ENCODE measurements at regions of chr14 and their contacts with region 1.

Region 1: DNA sequence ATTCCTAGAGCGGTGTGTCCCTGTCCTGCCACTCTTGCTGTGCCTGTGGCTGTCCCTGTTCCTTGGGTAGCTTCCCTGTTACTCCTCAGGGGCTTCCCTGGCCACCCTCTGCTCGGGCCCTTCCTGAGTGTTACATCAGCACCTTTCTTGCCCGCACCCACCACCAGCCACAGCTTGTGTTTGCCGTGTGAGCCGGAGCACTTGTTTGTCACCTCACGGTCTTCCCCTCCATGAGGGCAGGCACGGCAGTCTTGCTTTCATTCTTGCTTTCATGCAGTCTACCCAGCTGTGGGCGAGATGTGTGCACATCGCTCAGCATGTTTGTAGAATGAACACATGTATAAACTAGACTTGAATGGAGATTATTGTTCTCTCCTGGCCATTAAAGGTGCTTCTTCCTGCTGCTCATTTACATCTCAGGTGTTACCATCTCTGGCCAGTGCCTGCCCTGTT is 42.0 kb downstream of the TRAF3 start:
- DNase-seq: peak; percentile 89
- ATAC-seq: peak; percentile 90
- H3K4me3 ChIP-seq: peak overlapping the region; percentile 58
- H3K27ac ChIP-seq: peak overlapping the region; percentile 93
- H3K4me1 ChIP-seq: peaks cover 62% of the 10 kb centered on the region
- H3K27me3 ChIP-seq: no peaks in the 10 kb centered on the region
- CTCF ChIP-seq: no peak
- EP300 ChIP-seq: peak; percentile 92 to 94
- POLR2A ChIP-seq: peak; percentile 77
- RAD21 ChIP-seq: no peak

Region 2: DNA sequence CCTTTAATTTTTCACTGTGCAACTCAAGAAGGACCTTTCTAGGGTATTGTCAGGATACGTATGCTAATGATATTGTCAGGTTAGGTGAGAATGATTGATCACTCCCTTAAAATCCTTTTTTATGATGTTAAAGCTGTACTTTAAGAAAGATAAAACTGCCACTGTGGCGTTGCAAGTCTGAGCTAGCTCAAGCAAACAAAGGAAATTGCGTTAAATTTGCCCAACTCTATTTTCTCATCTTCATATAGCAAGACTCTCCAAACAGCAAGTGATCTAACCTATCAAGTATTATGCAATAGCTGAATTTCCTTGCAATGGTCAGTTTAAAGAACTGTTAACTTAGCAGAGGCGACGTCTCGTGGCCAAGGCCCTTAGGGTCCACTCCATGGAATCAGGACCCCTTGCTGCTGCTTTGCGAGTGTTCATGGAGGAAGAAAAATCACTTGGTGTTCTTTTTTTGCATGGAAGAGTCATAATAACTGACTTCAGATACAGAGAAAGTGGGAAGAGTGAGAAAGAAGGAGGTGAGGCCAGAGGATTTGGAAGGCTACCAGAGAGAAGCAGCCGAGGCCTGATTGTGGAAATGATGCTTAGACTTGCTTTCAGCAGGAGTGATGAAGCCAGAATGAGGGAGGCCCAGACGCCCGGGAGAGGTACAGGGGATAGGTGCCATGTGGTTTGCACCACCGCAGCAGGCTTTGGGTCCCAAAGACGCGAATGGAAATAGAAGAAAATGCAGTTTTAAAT is 39.5 kb before region 1 on chr14:
- CTCF ChIA-PET with region 1: interaction called, 83 read pairs
- POLR2A ChIA-PET with region 1: interaction called, 23 read pairs
- RAD21 ChIA-PET with region 1: interaction called, 86 read pairs
- SMC1A ChIA-PET with region 1: interaction called, 99 read pairs
- in situ Hi-C with region 1: no loop called
- intact Hi-C with region 1: loop called (anchors 2 kb)
- DNase-seq: no peak
- ATAC-seq: no peak
- H3K4me3 ChIP-seq: peak overlapping the region; percentile 90
- H3K27ac ChIP-seq: peak overlapping the region; percentile 98
- H3K4me1 ChIP-seq: peaks cover 31% of the 10 kb centered on the region
- H3K27me3 ChIP-seq: no peaks in the 10 kb centered on the region
- CTCF ChIP-seq: peak in 1 of 3 experiments; percentile 24; a peak in 1 of 6 replicates
- EP300 ChIP-seq: no peak
- POLR2A ChIP-seq: no peak
- RAD21 ChIP-seq: peak; percentile 13; the same call in 1 of the 2 replicates

Region 3: DNA sequence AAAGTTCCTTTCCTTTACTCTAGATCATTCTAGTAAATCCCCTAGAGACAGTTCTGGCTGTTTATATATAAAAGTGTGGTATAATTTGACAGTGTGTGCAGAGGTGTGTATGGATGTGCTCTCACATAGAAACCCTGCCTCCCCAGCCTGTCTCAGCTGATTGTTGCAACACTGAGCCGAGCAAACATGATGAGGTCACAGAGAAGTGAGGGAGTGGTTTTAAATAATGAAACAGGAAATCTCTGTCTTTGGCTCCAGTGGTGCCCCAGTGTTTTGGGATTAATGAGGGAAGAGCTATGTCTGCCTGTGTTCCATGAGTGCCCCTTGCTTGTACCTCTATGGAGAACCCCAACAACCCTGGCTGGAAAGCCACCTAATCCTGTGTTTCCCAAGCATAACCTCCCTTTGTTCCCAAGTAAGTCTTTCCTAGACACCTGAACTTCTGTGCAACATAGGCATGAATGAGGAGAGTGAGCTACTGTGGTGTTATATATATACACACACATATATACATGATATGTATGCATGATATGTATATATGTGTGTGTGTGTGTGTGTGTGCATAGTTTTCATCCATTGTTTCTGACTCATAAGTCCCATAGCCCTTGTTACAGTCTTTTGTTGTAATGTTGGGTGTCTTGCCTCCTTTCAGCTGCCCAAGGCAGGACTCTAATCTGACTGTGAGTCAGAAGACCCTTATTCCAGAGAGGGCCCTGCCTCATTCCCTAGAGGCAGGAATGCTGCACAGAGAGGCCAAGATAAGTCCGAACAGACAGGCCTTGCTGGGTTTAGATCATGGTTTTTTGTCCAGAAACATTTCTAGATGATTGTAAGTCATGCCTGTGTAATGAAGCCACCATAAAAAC is 23.9 kb before region 1 on chr14:
- CTCF ChIA-PET with region 1: interaction called, 7 read pairs
- POLR2A ChIA-PET with region 1: interaction called, 7 read pairs
- RAD21 ChIA-PET with region 1: interaction called, 53 read pairs
- SMC1A ChIA-PET with region 1: interaction called, 52 read pairs
- in situ Hi-C with region 1: no loop called
- intact Hi-C with region 1: loop called (anchors 1 kb)
- DNase-seq: no peak
- ATAC-seq: peak; percentile 66
- H3K4me3 ChIP-seq: no peak overlapping the region
- H3K27ac ChIP-seq: peak overlapping the region; percentile 42
- H3K4me1 ChIP-seq: peaks cover 57% of the 10 kb centered on the region
- H3K27me3 ChIP-seq: no peaks in the 10 kb centered on the region
- CTCF ChIP-seq: no peak
- EP300 ChIP-seq: 0 out of 4 replicates have a peak, but pooled peaks of 1 of the 2 experiments have one; percentile 10
- POLR2A ChIP-seq: no peak
- RAD21 ChIP-seq: no peak

Region 4: GRCh38 chr14:102805371-102806246 is 13.6 kb before region 1 on chr14:
- CTCF ChIA-PET with region 1: interaction called, 6 read pairs
- POLR2A ChIA-PET with region 1: interaction called, 63 read pairs
- RAD21 ChIA-PET with region 1: interaction called, 53 read pairs
- SMC1A ChIA-PET with region 1: interaction called, 52 read pairs
- in situ Hi-C with region 1: no loop called
- intact Hi-C with region 1: no loop called
- DNase-seq: no peak
- ATAC-seq: peak; percentile 73
- H3K4me3 ChIP-seq: peak overlapping the region; percentile 43; the same call in 1 of the 2 replicates
- H3K27ac ChIP-seq: peak overlapping the region; percentile 78
- H3K4me1 ChIP-seq: peaks cover 77% of the 10 kb centered on the region
- H3K27me3 ChIP-seq: no peaks in the 10 kb centered on the region
- CTCF ChIP-seq: 0 out of 6 replicates have a peak, but pooled peaks of 2 of the 3 experiments have one; percentile 0 to 7
- EP300 ChIP-seq: no peak
- POLR2A ChIP-seq: peak; percentile 25; the same call in 1 of the 2 replicates
- RAD21 ChIP-seq: no peak

Region 5: DNA sequence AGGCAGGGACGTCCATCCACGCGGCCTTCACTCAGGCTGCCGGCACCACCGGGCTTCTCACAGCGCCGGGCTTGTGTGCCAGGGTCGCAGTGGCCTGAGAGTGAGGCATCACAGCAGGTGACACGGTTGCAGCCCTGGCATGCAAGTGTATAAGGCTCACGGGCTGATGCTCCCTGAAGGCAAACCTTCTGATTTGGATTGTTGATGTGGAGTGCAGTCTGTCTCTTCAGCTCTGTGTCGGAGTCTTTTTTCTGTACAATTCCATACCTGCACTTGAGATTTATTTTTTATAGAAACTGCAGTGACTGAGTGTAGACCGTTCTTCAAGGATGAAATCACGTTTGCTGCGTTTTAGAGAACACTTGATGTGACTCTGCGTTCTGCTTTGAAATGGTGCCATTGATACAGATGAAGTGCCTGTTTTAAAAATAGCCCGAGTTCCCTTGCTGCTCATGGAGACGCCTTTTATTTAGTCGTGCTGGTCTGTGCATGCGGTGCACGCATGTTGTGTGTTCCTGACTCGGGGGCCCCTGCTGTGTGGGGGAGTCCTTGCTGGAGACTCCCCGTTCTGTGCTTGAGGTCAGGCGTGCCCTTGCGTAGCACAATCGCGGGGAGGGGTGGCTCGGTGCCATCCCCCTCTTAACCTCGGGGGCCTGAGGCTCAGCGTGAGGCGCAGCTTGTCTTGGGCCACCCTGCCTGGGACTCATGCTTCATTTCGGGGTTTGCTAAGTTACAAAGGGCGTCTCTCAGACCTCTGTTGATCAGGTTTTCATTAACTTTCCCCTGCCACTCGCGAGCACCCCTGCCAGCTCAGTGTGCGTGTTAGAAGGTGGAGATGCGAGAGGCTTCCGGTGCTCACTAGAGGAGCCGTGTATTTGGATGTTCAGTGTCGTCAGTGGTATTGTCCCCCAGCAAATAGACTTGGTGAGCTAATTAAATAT is 81.7 kb after region 1 on chr14:
- CTCF ChIA-PET with region 1: interaction called, 4 read pairs
- POLR2A ChIA-PET with region 1: interaction called, 10 read pairs
- RAD21 ChIA-PET with region 1: interaction called, 17 read pairs
- SMC1A ChIA-PET with region 1: interaction called, 23 read pairs
- in situ Hi-C with region 1: no loop called
- intact Hi-C with region 1: no loop called
- DNase-seq: no peak
- ATAC-seq: peak; percentile 76
- H3K4me3 ChIP-seq: peak overlapping the region; percentile 43
- H3K27ac ChIP-seq: peak overlapping the region; percentile 98
- H3K4me1 ChIP-seq: peaks cover 59% of the 10 kb centered on the region
- H3K27me3 ChIP-seq: no peaks in the 10 kb centered on the region
- CTCF ChIP-seq: no peak
- EP300 ChIP-seq: no peak; a peak in 2 of 4 replicates
- POLR2A ChIP-seq: peak; percentile 61
- RAD21 ChIP-seq: no peak

Region 6: GRCh38 chr14:103104654-103105452 is 285.7 kb after region 1 on chr14:
- CTCF ChIA-PET with region 1: no interaction called
- POLR2A ChIA-PET with region 1: no interaction called
- RAD21 ChIA-PET with region 1: no interaction called
- SMC1A ChIA-PET with region 1: no interaction called
- in situ Hi-C with region 1: no loop called
- intact Hi-C with region 1: no loop called
- DNase-seq: no peak
- ATAC-seq: peak; percentile 83
- H3K4me3 ChIP-seq: no peak overlapping the region
- H3K27ac ChIP-seq: no peak overlapping the region
- H3K4me1 ChIP-seq: peaks cover 42% of the 10 kb centered on the region
- H3K27me3 ChIP-seq: peaks cover 5 to 11% of the 10 kb centered on the region in 2 experiments; a peak in 2 of 4 replicates
- CTCF ChIP-seq: peak; percentile 96 to 98 (median 98)
- EP300 ChIP-seq: no peak
- POLR2A ChIP-seq: no peak
- RAD21 ChIP-seq: peak; percentile 93

Measured in GM12878 (cell line).